ENCODE measurements at regions of chr6 and their contacts with region 1.

Region 1: GRCh38 chr6:106568530-106568929 is 60.8 kb downstream of the RTN4IP1 start:
- DNase-seq: no peak
- ATAC-seq: no peak
- H3K4me3 ChIP-seq: no peak overlapping the region
- H3K27ac ChIP-seq: no peak overlapping the region
- H3K4me1 ChIP-seq: peaks cover 0 to 9% (median 0%) of the 10 kb centered on the region in 12 donors
- H3K27me3 ChIP-seq: no peaks in the 10 kb centered on the region
- CTCF ChIP-seq: no peak
- POLR2A ChIP-seq: no peak

Region 2: GRCh38 chr6:106339334-106340029 is 229.0 kb before region 1 on chr6:
- intact Hi-C with region 1: loop called in 9 of 10 experiments (anchors 2 to 10 kb)
- DNase-seq: peak in 3 of 5 donors; percentile 9 to 30 (median 24)
- ATAC-seq: peak in 3 of 4 donors; percentile 71 to 88 (median 82)
- H3K4me3 ChIP-seq: peak overlapping the region in 1 of 12 donors; percentile 7
- H3K27ac ChIP-seq: no peak overlapping the region
- H3K4me1 ChIP-seq: peaks cover 0 to 5% (median 0%) of the 10 kb centered on the region in 12 donors
- H3K27me3 ChIP-seq: peaks cover 0 to 5% (median 0%) of the 10 kb centered on the region in 9 donors
- CTCF ChIP-seq: peak; percentile 54 to 74 (median 65)
- POLR2A ChIP-seq: no peak

Region 3: GRCh38 chr6:106444777-106445507 is 123.6 kb before region 1 on chr6:
- intact Hi-C with region 1: loop called (anchors 1 to 2 kb)
- DNase-seq: no peak
- ATAC-seq: peak in 3 of 4 donors; percentile 59 to 68 (median 67)
- H3K4me3 ChIP-seq: no peak overlapping the region
- H3K27ac ChIP-seq: no peak overlapping the region
- H3K4me1 ChIP-seq: peaks cover 0 to 23% (median 0%) of the 10 kb centered on the region in 12 donors
- H3K27me3 ChIP-seq: peaks cover 0 to 39% (median 3%) of the 10 kb centered on the region in 9 donors
- CTCF ChIP-seq: peak; percentile 70 to 87 (median 76)
- POLR2A ChIP-seq: no peak

Region 4: GRCh38 chr6:106704327-106704726 is 135.8 kb after region 1 on chr6:
- intact Hi-C with region 1: no loop called
- DNase-seq: no peak
- ATAC-seq: no peak
- H3K4me3 ChIP-seq: no peak overlapping the region
- H3K27ac ChIP-seq: no peak overlapping the region
- H3K4me1 ChIP-seq: no peaks in the 10 kb centered on the region
- H3K27me3 ChIP-seq: peaks cover 0 to 14% (median 0%) of the 10 kb centered on the region in 9 donors
- CTCF ChIP-seq: no peak
- POLR2A ChIP-seq: no peak